Uterus (tissue), 4 donors: ENCODE measurements at regions of chr17 and their contacts with region 1.

Region 1: DNA sequence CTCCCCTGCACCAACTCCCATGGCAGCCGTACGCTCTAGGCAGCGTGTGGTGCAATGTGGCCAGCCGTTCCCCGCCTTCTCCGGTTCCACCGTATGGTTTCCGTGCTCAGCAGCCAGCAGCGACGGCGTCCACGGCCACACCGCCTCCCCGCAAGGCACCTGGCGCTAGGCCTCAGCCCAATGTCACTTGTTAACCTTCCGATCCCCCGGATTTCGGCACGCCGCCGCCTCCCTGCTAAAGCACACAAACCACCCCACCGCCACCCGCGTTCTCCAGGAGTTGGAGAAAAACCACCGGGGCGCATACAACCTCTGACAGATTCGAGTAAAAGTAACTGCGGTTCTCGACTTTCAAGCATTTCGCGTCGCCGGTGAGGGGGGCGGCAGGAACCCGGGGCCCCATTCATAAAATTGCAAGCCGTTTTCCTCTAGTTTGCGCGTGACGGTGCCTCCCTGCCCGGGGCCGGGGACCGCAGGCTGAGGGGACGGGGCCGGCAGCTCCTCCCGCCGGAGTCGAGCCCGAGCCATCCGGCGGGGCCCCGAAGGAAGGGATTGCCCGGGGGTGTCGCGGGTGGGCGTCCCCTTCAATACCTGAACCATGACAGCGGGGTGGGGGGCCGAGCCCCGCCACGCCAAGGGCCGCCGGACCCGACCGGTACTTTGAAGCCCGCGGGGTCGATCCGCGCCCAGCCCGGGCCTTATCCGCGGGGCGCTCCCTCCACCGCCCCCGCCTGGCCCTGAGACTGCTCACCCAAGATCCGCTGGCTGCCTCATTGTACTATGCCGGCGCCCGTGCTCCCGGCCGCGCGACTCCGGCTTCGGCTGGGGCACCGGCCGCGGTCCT is at the start of gene TEX2:
- DNase-seq: peak; percentile 36 to 39
- H3K4me3 ChIP-seq: peak within 1 kb of the TSS; percentile 94 to 96
- H3K27ac ChIP-seq: peak within 1 kb of the TSS; percentile 86 to 87
- H3K4me1 ChIP-seq: peaks cover 0 to 4% of the 10 kb centered on the region in 2 donors
- H3K27me3 ChIP-seq: no peaks in the 10 kb centered on the region
- CTCF ChIP-seq: no peak
- POLR2A ChIP-seq: peak; percentile 33 to 73
- total RNA-seq, gene TEX2: 23.8 to 43.4 (median 35.6) TPM

Region 2: GRCh38 chr17:64155751-64156544 is 106.7 kb before region 1 on chr17:
- intact Hi-C with region 1: loop called (anchors 10 kb)
- DNase-seq: peak; percentile 52 to 55
- H3K4me3 ChIP-seq: no peak overlapping the region
- H3K27ac ChIP-seq: peak overlapping the region; percentile 64 to 65
- H3K4me1 ChIP-seq: peaks cover 0 to 7% of the 10 kb centered on the region in 2 donors
- H3K27me3 ChIP-seq: no peaks in the 10 kb centered on the region
- CTCF ChIP-seq: no peak
- POLR2A ChIP-seq: no peak

Region 3: DNA sequence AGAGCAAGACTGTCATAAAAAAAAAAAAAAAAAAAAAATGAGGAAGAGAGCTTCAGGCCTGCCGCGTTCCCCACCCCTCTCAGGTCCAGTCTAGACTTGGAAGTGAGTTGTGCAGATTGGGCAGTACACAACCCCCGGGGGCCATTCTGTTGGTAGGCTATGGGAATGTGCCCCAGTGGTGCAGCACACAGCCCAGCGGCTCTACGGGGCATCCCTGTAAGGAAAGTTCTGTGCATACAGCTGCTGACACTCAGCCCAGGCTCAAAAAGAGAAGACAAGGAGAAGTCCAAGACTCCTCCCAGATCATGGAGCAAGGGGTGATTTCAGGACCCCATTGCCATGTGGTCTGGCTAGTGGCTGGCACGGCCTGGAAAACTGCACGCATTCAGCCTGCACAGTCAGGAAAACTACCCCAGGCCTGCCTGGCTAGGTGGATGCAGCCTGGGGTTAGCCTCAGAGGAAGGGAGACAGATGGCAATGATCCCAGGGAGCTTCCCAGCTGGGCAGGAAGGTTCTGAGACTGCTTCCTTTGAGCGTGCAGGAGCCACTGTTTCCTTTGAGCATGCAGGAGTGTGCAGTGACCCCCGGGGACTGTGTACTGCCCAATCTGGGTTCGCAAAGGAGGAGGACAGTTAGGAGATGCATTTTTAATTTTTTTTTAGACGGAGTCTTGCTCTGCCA is 83.2 kb after region 1 on chr17:
- intact Hi-C with region 1: no loop called
- DNase-seq: peak in 1 of 2 donors; percentile 29
- H3K4me3 ChIP-seq: no peak overlapping the region
- H3K27ac ChIP-seq: peak overlapping the region in 1 of 2 donors; percentile 37
- H3K4me1 ChIP-seq: peaks cover 0 to 4% of the 10 kb centered on the region in 2 donors
- H3K27me3 ChIP-seq: no peaks in the 10 kb centered on the region
- CTCF ChIP-seq: no peak
- POLR2A ChIP-seq: no peak